ENCODE measurements at regions of chr12 and their contacts with region 1.

Region 1: DNA sequence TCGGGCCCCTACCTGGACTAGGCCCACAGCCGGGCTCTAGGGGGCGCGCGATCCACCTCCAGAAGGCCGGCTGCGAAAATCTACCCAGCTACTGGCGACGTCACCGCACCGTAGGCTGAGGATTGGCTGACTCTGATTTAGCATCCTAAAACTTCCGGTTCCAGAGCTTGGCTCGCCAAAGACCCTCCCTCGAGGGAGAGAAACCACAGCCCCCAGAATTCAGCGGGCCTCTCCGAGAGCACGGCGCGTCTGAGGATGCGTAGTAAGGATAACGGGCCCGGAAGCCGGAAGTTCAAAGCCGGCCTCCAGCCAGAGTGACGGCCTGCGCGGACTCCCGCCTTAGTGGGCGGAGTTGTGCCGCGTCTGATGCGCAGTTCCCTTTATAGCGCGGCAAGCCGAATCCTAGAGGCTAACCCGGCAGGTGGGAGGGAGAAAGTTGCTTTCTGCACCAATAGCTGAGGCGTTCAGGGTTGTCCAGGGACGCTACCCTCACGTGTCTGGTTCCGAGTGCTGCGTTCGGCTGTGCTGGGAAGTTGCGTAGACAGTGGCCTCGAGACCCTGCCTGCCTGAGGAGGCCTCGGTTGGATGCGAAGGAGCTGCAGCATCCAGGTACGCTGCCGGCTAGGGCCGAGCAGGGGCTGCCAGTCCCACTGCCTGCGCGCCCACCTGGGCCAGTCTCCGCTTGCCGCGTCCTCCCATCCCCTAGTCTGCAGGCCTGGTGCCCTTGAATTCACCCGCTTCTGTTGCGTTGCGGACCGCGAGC is at the start of gene COX14:
- DNase-seq: peak; percentile 99
- ATAC-seq: peak; percentile 91
- H3K4me3 Mint-ChIP-seq: peak within 1 kb of the TSS; percentile 100
- H3K27ac Mint-ChIP-seq: peak within 1 kb of the TSS; percentile 99
- H3K4me1 Mint-ChIP-seq: peaks cover 38% of the 10 kb centered on the region
- H3K27me3 Mint-ChIP-seq: no peaks in the 10 kb centered on the region
- total RNA-seq, gene COX14: 26.8 to 44.2 TPM

Region 2: DNA sequence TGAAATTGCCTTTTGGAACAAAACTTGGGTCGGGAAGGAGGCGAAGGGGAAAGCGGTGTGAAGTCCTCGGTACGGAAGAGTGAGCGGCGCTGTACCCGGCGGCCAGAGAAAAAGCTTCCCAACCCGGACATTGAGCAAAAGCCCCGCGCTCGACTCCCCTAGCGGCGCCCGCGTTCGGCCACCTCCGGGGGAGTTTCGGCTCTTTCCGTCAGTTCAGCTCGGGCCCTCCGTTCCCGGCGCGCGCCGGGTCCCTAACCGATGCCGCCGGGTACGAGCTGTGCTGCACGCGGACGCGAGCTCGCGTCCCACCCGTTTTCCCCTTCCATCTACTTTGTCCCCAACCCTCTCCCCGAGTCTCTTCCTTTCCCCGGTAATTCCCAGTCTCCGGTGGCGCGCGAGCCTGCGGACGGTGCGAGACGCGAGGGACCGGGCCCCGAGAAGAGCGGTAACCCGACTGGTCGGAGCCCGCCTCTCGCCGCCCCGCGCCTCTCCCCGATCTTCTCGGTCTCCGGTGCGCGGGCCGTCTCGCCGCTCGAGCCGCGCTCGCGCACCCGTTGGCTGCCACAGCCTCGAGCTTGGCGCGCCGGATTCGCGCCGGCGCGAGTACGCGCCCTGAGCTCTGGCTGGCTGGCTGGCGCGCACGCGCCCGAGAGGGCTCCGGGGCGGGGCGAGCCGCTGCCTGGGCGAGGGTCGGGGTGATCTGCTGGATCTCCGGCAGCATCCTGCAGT is 745.1 kb before region 1 on chr12:
- CTCF ChIA-PET with region 1: no interaction called
- POLR2A ChIA-PET with region 1: no interaction called
- intact Hi-C with region 1: no loop called
- DNase-seq: peak; percentile 94
- ATAC-seq: peak; percentile 86
- H3K4me3 Mint-ChIP-seq: peak overlapping the region; percentile 97
- H3K27ac Mint-ChIP-seq: peak overlapping the region; percentile 99
- H3K4me1 Mint-ChIP-seq: peaks cover 25% of the 10 kb centered on the region
- H3K27me3 Mint-ChIP-seq: no peaks in the 10 kb centered on the region

Region 3: GRCh38 chr12:49967042-49967776 is 144.7 kb before region 1 on chr12:
- CTCF ChIA-PET with region 1: interaction called, 20 read pairs
- POLR2A ChIA-PET with region 1: interaction called, 3 read pairs
- intact Hi-C with region 1: no loop called
- DNase-seq: peak; percentile 97
- ATAC-seq: peak; percentile 92
- H3K4me3 Mint-ChIP-seq: peak overlapping the region; percentile 34
- H3K27ac Mint-ChIP-seq: no peak overlapping the region
- H3K4me1 Mint-ChIP-seq: no peaks in the 10 kb centered on the region
- H3K27me3 Mint-ChIP-seq: peaks cover 32% of the 10 kb centered on the region

Region 4: GRCh38 chr12:50084775-50085614 is 26.9 kb before region 1 on chr12 and contains the start of gene SMARCD1:
- CTCF ChIA-PET with region 1: interaction called, 146 read pairs
- POLR2A ChIA-PET with region 1: interaction called, 31 read pairs
- intact Hi-C with region 1: loop called (anchors 1 kb)
- DNase-seq: peak; percentile 91
- ATAC-seq: peak; percentile 90
- H3K4me3 Mint-ChIP-seq: peak within 1 kb of the TSS; percentile 85
- H3K27ac Mint-ChIP-seq: peak within 1 kb of the TSS; percentile 96
- H3K4me1 Mint-ChIP-seq: peaks cover 36% of the 10 kb centered on the region
- H3K27me3 Mint-ChIP-seq: no peaks in the 10 kb centered on the region
- total RNA-seq, gene SMARCD1: 51.8 to 76.6 TPM

Region 5: DNA sequence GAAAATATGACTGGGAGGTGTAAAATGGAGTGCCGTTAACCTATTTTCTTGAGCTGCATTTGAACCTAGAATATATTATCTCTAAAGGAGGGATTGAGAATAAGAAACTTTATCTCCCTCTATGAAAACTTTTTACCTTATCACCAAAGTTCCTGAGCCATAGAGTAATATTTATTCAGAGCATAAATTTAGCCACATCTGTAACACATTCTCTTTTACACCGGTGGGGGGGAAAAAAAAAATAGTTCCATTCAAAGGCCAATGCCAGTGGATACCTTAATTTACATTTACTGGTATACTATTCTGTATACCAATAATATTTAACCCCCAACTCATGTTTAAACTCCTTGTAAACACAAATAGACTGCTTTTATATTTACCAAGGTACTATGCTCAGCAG is 33.6 kb after region 1 on chr12:
- CTCF ChIA-PET with region 1: interaction called, 10 read pairs
- POLR2A ChIA-PET with region 1: interaction called, 5 read pairs
- intact Hi-C with region 1: no loop called
- DNase-seq: no peak
- ATAC-seq: no peak
- H3K4me3 Mint-ChIP-seq: no peak overlapping the region
- H3K27ac Mint-ChIP-seq: no peak overlapping the region
- H3K4me1 Mint-ChIP-seq: peaks cover 15% of the 10 kb centered on the region
- H3K27me3 Mint-ChIP-seq: no peaks in the 10 kb centered on the region

Region 6: GRCh38 chr12:50174971-50175715 is 63.3 kb after region 1 on chr12:
- CTCF ChIA-PET with region 1: interaction called, 41 read pairs
- POLR2A ChIA-PET with region 1: no interaction called
- intact Hi-C with region 1: loop called in 1 of 2 experiments (anchors 2 kb)
- DNase-seq: no peak
- ATAC-seq: no peak
- H3K4me3 Mint-ChIP-seq: no peak overlapping the region
- H3K27ac Mint-ChIP-seq: no peak overlapping the region
- H3K4me1 Mint-ChIP-seq: no peaks in the 10 kb centered on the region
- H3K27me3 Mint-ChIP-seq: no peaks in the 10 kb centered on the region

Region 7: GRCh38 chr12:51025836-51026638 is 914.2 kb after region 1 on chr12 and contains the start of gene SLC11A2:
- CTCF ChIA-PET with region 1: no interaction called
- POLR2A ChIA-PET with region 1: no interaction called
- intact Hi-C with region 1: loop called in 1 of 2 experiments (anchors 1 kb)
- DNase-seq: peak; percentile 97
- ATAC-seq: peak; percentile 88
- H3K4me3 Mint-ChIP-seq: peak within 1 kb of the TSS; percentile 93
- H3K27ac Mint-ChIP-seq: peak within 1 kb of the TSS; percentile 98
- H3K4me1 Mint-ChIP-seq: peaks cover 55% of the 10 kb centered on the region
- H3K27me3 Mint-ChIP-seq: no peaks in the 10 kb centered on the region
- total RNA-seq, gene SLC11A2: 31.0 to 32.9 TPM

Measured in activated CD4-positive, alpha-beta T cell treated with anti-CD3 and anti-CD28 coated beads for 36 hours (primary cell).